ENCODE measurements at regions of chr12 and their contacts with region 1.

Region 1: DNA sequence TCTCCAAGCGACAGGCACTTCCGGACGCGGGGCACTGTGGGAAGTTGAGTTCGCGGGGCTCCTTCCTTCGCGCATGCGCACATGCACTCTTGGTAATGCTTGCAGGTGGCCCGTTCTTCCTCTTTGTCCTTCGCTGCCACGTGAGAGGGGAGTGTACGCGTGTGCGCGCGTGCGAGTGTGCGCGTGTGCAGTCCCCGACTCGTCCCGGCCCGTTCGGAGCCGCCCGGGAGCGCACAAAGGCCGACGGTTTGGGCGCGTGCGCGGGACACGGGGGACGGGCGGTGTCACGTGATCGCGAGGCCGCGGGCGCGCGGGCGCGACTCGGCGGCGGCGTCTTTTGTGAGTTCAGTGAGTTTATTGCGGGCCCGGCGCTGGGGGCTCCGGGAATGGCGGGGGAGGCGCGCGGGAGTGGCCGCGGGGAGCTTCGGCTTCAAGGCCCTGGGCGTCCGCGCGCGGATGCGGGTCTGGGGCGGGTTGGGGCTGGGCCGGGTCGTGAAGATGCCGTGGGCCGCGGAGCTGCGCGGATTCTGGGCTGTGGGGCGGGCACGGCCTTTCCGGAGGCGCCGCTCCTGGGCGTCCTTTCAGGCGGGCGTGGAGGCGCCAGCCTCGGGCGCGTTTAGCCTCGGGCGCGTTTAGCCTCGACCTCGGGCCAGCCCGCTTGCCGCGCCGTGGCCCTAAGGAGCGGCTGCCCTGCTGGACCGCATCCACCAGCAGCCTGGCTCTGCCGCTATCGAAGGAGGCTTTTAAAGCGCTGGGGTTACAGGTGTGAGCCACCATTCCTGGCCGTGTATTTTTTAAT is at the start of gene ZNF84:
- DNase-seq: peak; percentile 97
- ATAC-seq: peak; percentile 97
- H3K4me3 ChIP-seq: peak within 1 kb of the TSS; percentile 78 to 94 (median 81)
- H3K27ac ChIP-seq: peak within 1 kb of the TSS; percentile 97
- H3K4me1 ChIP-seq: no peaks in the 10 kb centered on the region
- H3K27me3 ChIP-seq: no peaks in the 10 kb centered on the region
- CTCF ChIP-seq: no peak
- EP300 ChIP-seq: no peak
- POLR2A ChIP-seq: peak; percentile 59 to 68; a peak in 3 of 4 replicates
- RAD21 ChIP-seq: peak; percentile 38; the same call in 1 of the 2 replicates
- total RNA-seq, gene ZNF84: 21.2 and 21.8 TPM in 2 replicates

Region 2: DNA sequence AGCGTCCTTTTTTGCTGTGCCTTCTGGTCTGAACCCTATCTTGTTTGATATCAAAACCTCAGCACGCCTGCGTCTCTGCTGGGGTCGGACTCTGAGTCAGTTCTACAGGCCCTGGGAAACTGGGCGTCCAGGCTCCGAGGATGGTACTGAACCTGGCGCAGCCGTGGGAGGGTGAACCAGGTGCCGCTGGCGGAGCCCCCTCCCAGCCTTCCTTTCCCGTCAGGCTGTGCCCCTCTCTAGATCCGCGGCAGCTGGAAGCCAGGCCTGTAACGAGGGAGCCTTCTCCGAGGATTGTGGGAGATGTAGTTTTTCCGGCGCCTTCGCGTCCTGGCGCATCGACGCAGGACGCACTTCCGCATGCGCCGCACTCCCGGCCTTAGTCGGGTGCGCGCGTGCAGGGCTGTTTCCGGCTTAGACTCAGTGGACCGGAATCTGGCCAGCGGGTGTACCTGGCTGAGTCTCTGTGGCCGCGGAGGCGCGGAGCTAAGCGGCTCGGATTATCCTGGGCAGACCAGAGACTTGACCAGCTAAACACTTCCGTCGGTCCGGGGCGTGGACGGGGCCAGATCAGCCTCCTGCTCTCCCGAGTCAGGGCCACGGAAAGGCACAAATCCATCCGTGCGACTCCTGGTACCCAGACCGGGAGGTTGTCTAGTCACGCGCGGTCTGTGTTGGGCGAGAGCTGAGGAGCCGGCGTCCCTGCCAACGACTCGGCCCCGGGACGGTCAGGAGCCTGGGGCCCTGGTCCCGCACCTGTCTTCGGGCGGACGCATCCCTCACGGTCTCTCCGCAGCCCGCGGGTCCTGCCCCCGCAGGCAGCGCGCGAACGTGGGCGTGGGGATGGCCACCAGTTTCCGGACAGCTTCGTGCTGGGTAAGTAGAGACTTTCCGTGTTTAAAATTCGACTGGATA is 51.1 kb before region 1 on chr12 and contains the start of gene ZNF26:
- CTCF ChIA-PET with region 1: no interaction called
- POLR2A ChIA-PET with region 1: interaction called, 8 read pairs
- in situ Hi-C with region 1: loop called (anchors 5 kb)
- intact Hi-C with region 1: no loop called
- DNase-seq: peak; percentile 90
- ATAC-seq: peak; percentile 98
- H3K4me3 ChIP-seq: peak within 1 kb of the TSS; percentile 83 to 99 (median 96)
- H3K27ac ChIP-seq: peak within 1 kb of the TSS; percentile 60
- H3K4me1 ChIP-seq: peaks cover 17% of the 10 kb centered on the region
- H3K27me3 ChIP-seq: no peaks in the 10 kb centered on the region; a peak in 1 of 5 replicates
- CTCF ChIP-seq: peak; percentile 35; the same call in 1 of the 2 replicates
- EP300 ChIP-seq: 0 out of 4 replicates have a peak, but pooled peaks of 1 of the 2 experiments have one; percentile 57
- POLR2A ChIP-seq: peak; percentile 85 to 89
- RAD21 ChIP-seq: peak; percentile 25; the same call in 1 of the 2 replicates
- total RNA-seq, gene ZNF26: 6.5 and 8.4 TPM in 2 replicates

Region 3: GRCh38 chr12:133010657-133011297 is 26.6 kb before region 1 on chr12:
- CTCF ChIA-PET with region 1: no interaction called
- POLR2A ChIA-PET with region 1: no interaction called
- in situ Hi-C with region 1: no loop called
- intact Hi-C with region 1: no loop called
- DNase-seq: no peak
- ATAC-seq: no peak
- H3K4me3 ChIP-seq: no peak overlapping the region
- H3K27ac ChIP-seq: no peak overlapping the region
- H3K4me1 ChIP-seq: no peaks in the 10 kb centered on the region
- H3K27me3 ChIP-seq: no peaks in the 10 kb centered on the region
- CTCF ChIP-seq: no peak
- EP300 ChIP-seq: no peak
- POLR2A ChIP-seq: no peak
- RAD21 ChIP-seq: no peak

Measured in HepG2 (cell line).